Prostate gland (tissue), 2 donors: ENCODE measurements at regions of chr20 and their contacts with region 1.

Region 1: GRCh38 chr20:31951530-31952453 is at the start of gene PDRG1:
- DNase-seq: peak; percentile 89
- H3K4me3 ChIP-seq: peak within 1 kb of the TSS; percentile 64 to 82
- H3K27ac ChIP-seq: peak within 1 kb of the TSS; percentile 48 to 68
- H3K4me1 ChIP-seq: peaks cover 3% of the 10 kb centered on the region
- H3K27me3 ChIP-seq: peaks cover 3% of the 10 kb centered on the region
- CTCF ChIP-seq: peak; percentile 90 to 100 (median 98)
- POLR2A ChIP-seq: peak; percentile 53
- total RNA-seq, gene PDRG1: 11.4 to 30.3 TPM

Region 2: GRCh38 chr20:31806564-31807355 is 145.0 kb before region 1 on chr20:
- intact Hi-C with region 1: no loop called
- DNase-seq: no peak
- H3K4me3 ChIP-seq: no peak overlapping the region
- H3K27ac ChIP-seq: no peak overlapping the region
- H3K4me1 ChIP-seq: no peaks in the 10 kb centered on the region
- H3K27me3 ChIP-seq: no peaks in the 10 kb centered on the region
- CTCF ChIP-seq: no peak
- POLR2A ChIP-seq: no peak

Region 3: GRCh38 chr20:31822421-31823330 is 129.1 kb before region 1 on chr20:
- intact Hi-C with region 1: loop called (anchors 10 kb)
- DNase-seq: peak; percentile 56
- H3K4me3 ChIP-seq: no peak overlapping the region
- H3K27ac ChIP-seq: no peak overlapping the region
- H3K4me1 ChIP-seq: no peaks in the 10 kb centered on the region
- H3K27me3 ChIP-seq: no peaks in the 10 kb centered on the region
- CTCF ChIP-seq: peak; percentile 93 to 98 (median 96)
- POLR2A ChIP-seq: no peak

Region 4: DNA sequence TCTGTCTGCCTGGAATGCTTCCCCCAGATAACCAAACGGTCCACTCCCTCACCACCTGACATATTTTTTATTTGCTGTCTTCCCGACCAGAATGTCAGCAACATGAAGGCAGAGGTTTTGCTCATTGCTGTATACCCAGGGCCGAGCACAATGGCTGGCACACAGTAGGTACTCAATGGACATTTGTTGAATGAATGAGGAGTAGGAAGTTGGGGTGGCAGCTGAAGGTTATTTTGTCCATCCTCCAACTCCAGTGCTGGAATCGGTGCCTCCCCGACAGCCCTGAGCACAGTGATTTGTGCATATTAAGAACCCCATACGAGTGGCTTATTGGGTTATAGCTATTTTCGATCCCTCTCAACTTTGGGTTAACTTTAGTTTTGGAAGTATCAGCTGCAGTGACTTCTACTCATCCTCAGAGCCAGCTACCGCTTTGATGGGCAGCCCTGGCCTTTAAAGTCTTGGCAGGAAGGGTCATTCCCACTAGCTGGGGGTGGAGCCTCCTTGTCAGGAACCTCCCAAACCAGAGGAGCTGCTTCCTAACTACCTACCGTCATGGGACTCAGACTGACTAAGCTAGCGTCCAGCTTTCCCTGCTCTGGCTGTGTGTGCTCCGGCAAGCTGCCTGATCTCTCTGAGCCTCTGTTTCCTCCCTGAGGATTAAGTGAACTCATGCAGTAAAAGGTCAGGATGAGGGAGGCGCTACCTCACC is 91.6 kb before region 1 on chr20:
- intact Hi-C with region 1: loop called (anchors 2 kb)
- DNase-seq: peak; percentile 40
- H3K4me3 ChIP-seq: peak overlapping the region; percentile 39 to 52
- H3K27ac ChIP-seq: peak overlapping the region in 1 of 2 donors; percentile 22
- H3K4me1 ChIP-seq: peaks cover 5% of the 10 kb centered on the region
- H3K27me3 ChIP-seq: no peaks in the 10 kb centered on the region
- CTCF ChIP-seq: no peak
- POLR2A ChIP-seq: no peak